GM13976 (cell line): ENCODE measurements at regions of chr17 and their contacts with region 1.

Region 1: DNA sequence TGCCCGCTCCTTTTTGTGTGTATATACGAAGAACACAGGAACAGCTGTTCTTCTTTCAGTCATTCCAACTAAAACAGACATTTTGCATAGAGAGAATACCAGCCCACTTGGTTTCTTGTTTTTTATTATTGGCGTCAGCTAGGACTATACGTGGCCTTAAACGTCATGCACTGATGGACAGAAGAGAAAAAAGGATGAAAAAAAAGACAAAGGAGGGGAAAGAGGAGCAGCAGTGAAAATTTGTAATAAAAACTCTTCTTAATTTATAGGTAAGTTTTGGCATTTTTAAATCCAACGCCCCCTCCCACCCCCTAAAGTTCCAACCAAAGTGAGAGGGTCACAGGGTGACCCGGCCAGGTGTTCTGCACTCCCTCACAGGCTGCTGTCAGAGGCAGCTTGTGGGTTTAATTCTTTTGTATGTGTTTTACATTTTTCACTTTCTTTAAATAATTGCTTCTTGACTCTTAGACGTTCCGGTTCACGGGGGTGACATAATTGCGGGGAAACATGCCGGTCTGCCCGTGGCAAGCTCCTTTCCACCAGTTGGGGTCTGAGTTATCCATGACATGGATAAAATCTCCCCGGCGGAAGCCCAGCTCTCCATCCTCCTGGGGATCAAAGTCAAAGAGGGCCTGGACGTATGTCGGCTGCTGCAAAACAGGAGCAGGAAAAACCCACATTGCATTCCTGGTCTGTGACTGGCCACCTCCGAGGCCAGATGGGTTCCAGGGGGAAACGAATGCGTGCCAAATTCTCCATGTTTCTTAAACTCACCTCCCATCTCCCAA is 30.9 kb upstream of the SLC25A19 start:
- DNase-seq: peak; percentile 78
- CTCF ChIP-seq: no peak

Region 2: DNA sequence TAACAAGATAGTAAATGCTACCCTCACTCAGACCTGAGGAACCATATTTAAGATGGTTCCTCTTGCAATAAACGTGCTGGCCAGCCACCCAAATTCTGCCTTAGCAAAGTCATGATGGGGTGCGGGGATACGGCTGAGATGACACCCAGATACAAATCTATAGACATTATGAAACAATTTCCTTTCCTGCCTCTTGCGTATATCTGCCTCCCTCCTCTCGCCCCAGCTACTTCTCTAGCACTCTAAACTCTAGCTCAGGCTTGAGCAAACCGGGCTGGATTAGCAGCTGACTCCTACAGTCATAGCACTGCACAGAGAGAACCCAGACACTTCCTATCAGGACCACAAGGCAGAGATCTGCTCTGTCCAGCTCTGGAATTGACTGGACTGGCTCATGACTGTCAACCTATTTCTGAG is 629.7 kb before region 1 on chr17:
- in situ Hi-C with region 1: no loop called
- DNase-seq: no peak
- CTCF ChIP-seq: no peak

Region 3: DNA sequence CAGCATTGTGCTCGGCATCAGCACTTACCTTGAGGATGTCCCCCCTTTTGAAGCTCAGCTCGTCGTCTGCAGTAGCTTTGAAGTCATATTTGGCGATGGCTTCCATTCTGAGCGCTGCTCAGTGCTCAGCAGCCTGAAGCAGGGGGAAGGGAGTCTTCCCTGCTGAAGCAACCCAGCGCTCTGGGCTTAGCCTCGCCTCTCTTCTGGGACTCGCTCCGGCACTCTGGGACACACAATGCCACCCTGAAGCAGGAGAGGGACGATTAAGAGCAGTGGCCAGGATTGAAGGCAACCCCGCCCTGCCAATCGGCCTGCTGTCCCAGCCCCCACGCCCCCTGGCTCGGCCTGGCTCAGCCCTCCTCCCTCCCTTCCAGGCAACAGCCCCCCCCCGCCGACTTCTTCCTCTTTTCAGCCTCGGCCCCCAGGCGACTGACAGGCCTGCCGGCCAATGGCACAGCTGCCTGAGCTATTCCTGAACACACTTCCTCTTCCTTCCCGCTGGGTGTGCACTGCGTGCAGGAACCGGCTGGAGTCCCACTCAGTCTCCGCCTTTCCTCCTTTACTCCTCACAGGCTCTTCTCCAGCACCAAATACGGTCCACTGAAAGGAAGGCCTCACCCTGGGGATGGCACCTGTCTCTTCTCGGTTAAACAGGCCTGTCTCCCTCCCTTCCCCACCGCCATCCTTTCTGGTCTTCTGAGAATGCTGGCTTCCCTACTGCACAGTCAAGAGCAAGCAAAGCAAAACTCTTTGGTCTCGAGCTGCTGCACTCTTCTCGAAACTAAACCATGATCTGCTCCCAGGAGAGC is 73.6 kb after region 1 on chr17:
- in situ Hi-C with region 1: no loop called
- DNase-seq: peak; percentile 92
- CTCF ChIP-seq: no peak

Region 4: DNA sequence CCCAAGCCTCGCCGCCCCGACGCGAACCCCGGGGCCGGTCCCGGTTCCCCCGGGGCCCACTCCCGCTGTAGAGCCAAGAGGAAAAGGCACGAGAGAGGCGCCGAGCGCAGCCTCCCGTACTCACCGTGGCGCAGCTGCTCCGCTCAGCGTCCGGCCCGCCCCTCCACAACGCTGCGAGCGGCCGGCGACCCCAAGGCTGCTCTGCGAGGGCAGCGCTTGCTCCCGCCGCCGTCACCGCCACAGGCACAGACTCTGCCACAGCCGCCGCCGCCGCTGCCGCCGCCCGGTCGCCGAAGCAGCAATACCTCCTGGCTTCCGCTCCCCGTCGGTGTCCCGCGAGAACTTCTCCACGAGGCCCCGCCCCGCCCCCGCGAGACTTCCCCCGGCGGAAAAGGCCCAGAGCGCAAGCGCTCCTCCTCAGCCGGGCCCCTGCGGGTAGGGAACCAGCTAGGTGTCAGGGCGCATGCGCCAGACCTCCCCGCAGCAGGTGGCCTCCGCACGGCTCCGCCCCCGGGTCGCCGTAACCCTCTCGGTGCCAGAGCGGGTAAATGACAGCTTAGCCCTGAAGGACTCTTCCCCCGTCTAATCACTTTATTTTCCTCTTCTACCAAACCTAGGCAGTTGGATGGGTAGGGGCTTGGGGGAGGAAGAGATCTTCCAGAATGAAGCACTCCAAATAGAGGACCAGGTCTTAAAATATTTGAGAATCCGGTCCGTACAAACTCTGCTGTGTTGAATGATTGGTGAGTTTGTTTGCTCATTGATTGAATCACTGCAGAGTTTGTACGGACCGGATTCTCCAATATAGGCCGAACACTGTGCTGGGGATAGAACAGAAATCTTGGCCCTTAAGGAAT is 85.5 kb after region 1 on chr17 and contains the start of gene GRB2:
- in situ Hi-C with region 1: loop called (anchors 10 kb)
- DNase-seq: peak; percentile 99
- CTCF ChIP-seq: no peak